ENCODE measurements at regions of chr9 and their contacts with region 1.

Region 1: DNA sequence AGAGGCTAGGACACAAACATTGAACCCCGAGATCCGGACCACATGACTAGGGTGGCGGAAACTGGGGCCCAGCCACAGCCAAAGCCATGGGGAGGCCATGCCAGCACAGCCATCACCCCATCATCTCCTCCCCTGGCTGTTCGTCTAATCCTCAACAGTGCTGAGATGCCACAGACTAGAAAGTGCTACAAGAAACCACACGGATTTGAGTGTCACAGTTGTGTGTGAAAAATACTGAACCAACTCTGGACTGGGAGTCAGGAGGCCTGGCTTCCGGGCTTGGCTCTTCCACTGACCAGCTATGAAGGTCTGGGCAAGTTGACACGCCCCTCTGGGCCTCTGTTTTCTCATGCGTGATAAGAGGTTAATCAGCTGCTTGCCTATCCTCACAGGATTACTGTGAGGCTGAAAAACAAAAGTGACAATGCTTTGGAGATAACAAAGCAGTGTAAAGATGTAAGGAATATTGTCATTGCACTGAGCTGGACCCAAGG is 38.8 kb upstream of the SHB start:
- DNase-seq: peak; percentile 37
- ATAC-seq: no peak

Region 2: GRCh38 chr9:37390759-37391158 is 717.1 kb before region 1 on chr9:
- intact Hi-C with region 1: no loop called
- DNase-seq: no peak
- ATAC-seq: no peak

Region 3: DNA sequence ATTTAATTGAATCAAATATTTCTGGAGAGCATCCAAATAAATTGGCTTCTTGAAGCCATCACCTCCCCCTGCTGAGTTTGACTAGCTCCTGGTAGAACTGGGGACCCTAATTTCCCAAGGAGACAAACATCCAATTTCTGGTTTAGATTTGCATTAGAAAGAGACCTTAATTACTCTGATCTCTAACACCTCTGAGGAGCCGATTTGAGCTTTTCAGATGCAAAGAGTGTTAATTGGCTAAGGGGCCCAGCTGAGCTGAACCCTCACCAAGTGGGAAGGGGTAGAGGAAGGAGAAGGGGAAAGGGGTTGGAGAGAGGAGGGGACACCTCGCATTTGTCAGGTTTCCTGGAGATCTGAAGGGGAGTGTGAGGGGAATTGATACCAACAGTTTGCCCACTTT is 106.6 kb after region 1 on chr9:
- intact Hi-C with region 1: loop called (anchors 10 kb)
- DNase-seq: no peak
- ATAC-seq: no peak

Measured in sciatic nerve (tissue), 2 donors.